ENCODE measurements at regions of chr12 and their contacts with region 1.

Region 1: GRCh38 chr12:56724972-56725722 is at the start of gene NACA:
- DNase-seq: peak; percentile 99
- H3K4me3 Mint-ChIP-seq: peak within 1 kb of the TSS; percentile 99
- H3K27ac Mint-ChIP-seq: peak within 1 kb of the TSS; percentile 99
- H3K4me1 Mint-ChIP-seq: peaks cover 46% of the 10 kb centered on the region
- H3K27me3 Mint-ChIP-seq: no peaks in the 10 kb centered on the region
- total RNA-seq, gene NACA: 1,279 to 1,321 TPM

Region 2: GRCh38 chr12:55940065-55940732 is 784.9 kb before region 1 on chr12:
- CTCF ChIA-PET with region 1: no interaction called
- intact Hi-C with region 1: no loop called
- DNase-seq: peak; percentile 94
- H3K4me3 Mint-ChIP-seq: no peak overlapping the region
- H3K27ac Mint-ChIP-seq: peak overlapping the region; percentile 74
- H3K4me1 Mint-ChIP-seq: peaks cover 72% of the 10 kb centered on the region
- H3K27me3 Mint-ChIP-seq: no peaks in the 10 kb centered on the region

Region 3: DNA sequence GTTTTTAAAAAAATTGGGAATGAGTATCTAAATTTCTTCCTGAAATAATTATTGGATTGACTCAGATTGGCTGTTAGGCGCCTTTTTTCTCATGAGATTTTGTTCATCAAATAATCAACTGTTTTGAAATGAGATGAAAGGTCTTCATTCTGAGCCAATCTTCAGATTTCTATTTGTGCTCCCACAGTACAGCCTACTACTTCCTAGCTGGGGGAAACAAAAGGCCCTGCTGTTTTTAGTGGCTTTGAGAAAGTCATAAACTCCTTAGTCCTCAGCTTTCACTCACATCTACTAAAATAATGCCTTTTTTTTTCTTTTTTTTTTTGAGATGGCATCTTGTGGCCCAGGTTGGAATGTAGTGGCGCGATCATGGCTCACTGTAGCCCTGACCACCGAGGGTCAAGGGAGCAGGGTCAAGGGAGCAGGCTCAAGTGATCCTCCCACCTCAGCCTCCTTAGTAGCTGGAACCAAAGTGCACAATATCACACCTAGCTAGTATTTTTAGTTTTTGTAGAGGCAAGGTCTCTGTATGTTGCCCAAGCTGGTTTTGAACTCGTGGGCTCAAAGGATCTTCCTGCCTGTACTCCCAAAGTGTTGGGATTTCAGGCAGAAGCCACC is 15.3 kb before region 1 on chr12:
- CTCF ChIA-PET with region 1: no interaction called
- intact Hi-C with region 1: no loop called
- DNase-seq: no peak
- H3K4me3 Mint-ChIP-seq: no peak overlapping the region
- H3K27ac Mint-ChIP-seq: no peak overlapping the region
- H3K4me1 Mint-ChIP-seq: peaks cover under 1% of the 10 kb centered on the region
- H3K27me3 Mint-ChIP-seq: no peaks in the 10 kb centered on the region

Region 4: DNA sequence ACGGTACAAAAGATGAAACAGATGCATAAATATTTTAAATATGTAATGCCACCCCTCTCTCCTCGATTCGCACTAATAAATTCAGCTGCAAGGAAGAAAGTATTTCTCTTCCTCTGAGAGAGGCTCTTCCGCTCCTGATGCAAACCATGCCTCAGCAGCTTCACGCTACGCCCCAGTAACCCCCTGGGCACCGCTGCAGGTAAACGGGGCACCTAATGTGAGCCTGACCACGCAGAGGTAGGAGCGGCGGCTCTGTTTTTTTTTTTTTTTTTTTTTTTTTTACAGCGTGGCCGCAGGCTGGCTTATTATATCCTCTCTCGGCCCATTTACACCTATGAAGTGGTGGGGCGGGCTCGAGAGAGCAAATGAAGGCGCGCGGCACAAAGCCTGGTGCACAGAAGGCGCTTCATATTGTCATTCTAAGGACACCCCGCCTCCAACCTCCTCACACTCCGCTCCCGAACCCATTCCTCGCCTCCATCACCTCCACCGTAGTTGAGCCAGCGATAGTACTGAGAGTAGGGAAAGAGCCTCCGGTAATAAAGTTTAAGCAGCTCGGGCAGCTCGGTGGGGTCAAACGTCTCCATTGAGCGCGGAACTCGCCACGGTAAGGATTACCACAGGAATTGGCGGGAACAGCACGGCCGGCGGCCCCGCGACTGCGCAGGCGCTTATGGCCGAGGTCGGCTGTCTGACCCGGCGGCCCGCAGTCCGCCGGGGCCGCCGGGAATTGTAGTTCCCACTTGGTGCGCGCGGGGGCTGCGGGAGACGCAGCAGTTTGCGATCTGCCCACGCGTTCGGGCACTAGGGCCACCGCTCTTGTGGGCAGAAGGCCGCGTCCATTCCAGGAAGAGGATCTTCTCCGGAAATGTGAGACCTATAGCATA is 26.8 kb after region 1 on chr12 and contains the start of gene PRIM1:
- CTCF ChIA-PET with region 1: interaction called, 4 read pairs
- intact Hi-C with region 1: loop called (anchors 1 kb)
- DNase-seq: peak; percentile 90
- H3K4me3 Mint-ChIP-seq: peak within 1 kb of the TSS; percentile 98
- H3K27ac Mint-ChIP-seq: peak within 1 kb of the TSS; percentile 99
- H3K4me1 Mint-ChIP-seq: peaks cover 40% of the 10 kb centered on the region
- H3K27me3 Mint-ChIP-seq: no peaks in the 10 kb centered on the region
- total RNA-seq, gene PRIM1: 74.9 to 75.0 TPM

Region 5: GRCh38 chr12:57078519-57079404 is 353.6 kb after region 1 on chr12 and contains the start of gene NEMP1:
- CTCF ChIA-PET with region 1: no interaction called
- intact Hi-C with region 1: loop called (anchors 5 kb)
- DNase-seq: peak; percentile 98
- H3K4me3 Mint-ChIP-seq: peak within 1 kb of the TSS; percentile 99
- H3K27ac Mint-ChIP-seq: peak within 1 kb of the TSS; percentile 98
- H3K4me1 Mint-ChIP-seq: peaks cover 37% of the 10 kb centered on the region
- H3K27me3 Mint-ChIP-seq: no peaks in the 10 kb centered on the region
- total RNA-seq, gene NEMP1: 71.3 to 72.2 TPM

Region 6: GRCh38 chr12:57771708-57772428 is 1046.7 kb after region 1 on chr12 and contains the start of gene METTL1:
- CTCF ChIA-PET with region 1: no interaction called
- intact Hi-C with region 1: no loop called
- DNase-seq: peak; percentile 97
- H3K4me3 Mint-ChIP-seq: peak within 1 kb of the TSS; percentile 98
- H3K27ac Mint-ChIP-seq: peak within 1 kb of the TSS; percentile 95
- H3K4me1 Mint-ChIP-seq: peaks cover 26% of the 10 kb centered on the region
- H3K27me3 Mint-ChIP-seq: peaks cover 2% of the 10 kb centered on the region
- total RNA-seq, gene METTL1: 17.3 to 20.4 TPM